ENCODE measurements at regions of chr17 and their contacts with region 1.

Region 1: GRCh38 chr17:29389982-29390850 is at the start of gene TAOK1:
- DNase-seq: peak; percentile 98
- H3K4me3 Mint-ChIP-seq: peak within 1 kb of the TSS; percentile 96
- H3K27ac Mint-ChIP-seq: peak within 1 kb of the TSS; percentile 94
- H3K4me1 Mint-ChIP-seq: peaks cover 30% of the 10 kb centered on the region
- H3K27me3 Mint-ChIP-seq: no peaks in the 10 kb centered on the region
- CTCF ChIP-seq: no peak
- total RNA-seq, gene TAOK1: 68.7 and 84.2 TPM in 2 replicates

Region 2: DNA sequence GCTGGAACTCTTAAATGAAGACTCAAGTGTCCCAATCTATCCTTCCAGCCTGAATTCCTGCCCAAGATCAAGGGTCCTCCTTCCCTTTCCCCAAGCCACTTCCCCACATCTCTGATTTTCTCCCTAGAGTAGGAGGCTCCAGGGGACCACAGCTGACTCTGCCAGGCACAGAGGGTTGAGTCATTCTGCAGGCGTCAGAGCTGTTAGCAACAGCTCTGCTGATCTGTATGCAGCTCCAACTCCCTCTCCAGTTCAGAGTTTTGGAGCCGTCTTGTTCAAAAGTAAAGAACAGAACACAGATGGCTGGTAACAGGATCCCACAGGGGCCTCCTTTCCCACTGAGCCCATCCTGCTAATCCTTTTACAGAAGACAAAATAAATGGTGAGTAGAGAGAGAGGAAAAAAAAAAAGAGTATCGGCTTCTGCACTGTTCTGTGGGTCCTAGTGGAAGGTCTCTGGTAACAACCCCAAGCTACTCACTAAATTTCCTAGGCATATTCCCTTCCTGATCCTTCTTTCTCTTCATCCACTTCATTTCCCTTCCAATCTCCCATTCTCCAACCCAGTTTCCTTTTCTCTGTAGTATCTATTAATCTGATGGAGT is 13.4 kb before region 1 on chr17:
- CTCF ChIA-PET with region 1: interaction called, 4 read pairs
- POLR2A ChIA-PET with region 1: interaction called, 20 read pairs
- intact Hi-C with region 1: no loop called
- DNase-seq: peak; percentile 63
- H3K4me3 Mint-ChIP-seq: no peak overlapping the region
- H3K27ac Mint-ChIP-seq: no peak overlapping the region
- H3K4me1 Mint-ChIP-seq: peaks cover 19% of the 10 kb centered on the region
- H3K27me3 Mint-ChIP-seq: no peaks in the 10 kb centered on the region
- CTCF ChIP-seq: no peak

Region 3: DNA sequence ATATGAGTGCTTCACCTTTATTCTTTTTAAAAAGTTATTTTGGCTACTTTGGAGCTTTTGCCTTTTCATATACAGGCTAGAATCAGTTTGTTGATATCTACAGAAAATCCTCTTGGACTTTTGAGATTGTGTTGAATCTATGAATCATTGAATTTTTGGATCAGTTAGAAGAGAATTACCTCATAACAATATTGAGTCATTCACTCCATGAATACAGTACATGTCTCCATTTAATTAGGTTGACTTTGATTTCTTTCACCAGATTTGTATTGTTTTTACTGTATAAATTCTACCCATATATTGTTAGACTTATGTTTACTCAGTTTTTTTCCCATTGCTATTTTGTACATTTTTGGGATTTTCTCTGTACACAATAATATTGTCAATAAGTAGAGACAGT is 54.4 kb after region 1 on chr17:
- CTCF ChIA-PET with region 1: no interaction called
- POLR2A ChIA-PET with region 1: interaction called, 6 read pairs
- intact Hi-C with region 1: loop called (anchors 10 kb)
- DNase-seq: peak; percentile 43
- H3K4me3 Mint-ChIP-seq: no peak overlapping the region
- H3K27ac Mint-ChIP-seq: no peak overlapping the region
- H3K4me1 Mint-ChIP-seq: peaks cover 25% of the 10 kb centered on the region
- H3K27me3 Mint-ChIP-seq: no peaks in the 10 kb centered on the region
- CTCF ChIP-seq: no peak

Measured in MCF 10A (cell line).